ENCODE measurements at regions of chr1 and their contacts with region 1.

Region 1: GRCh38 chr1:211616232-211616979 is 37.4 kb upstream of the SLC30A1 start:
- DNase-seq: peak; percentile 58
- H3K4me3 ChIP-seq: no peak overlapping the region
- H3K27ac ChIP-seq: peak overlapping the region; percentile 39 to 42
- H3K4me1 ChIP-seq: no peaks in the 10 kb centered on the region
- H3K27me3 ChIP-seq: no peaks in the 10 kb centered on the region
- CTCF ChIP-seq: no peak
- POLR2A ChIP-seq: no peak

Region 2: DNA sequence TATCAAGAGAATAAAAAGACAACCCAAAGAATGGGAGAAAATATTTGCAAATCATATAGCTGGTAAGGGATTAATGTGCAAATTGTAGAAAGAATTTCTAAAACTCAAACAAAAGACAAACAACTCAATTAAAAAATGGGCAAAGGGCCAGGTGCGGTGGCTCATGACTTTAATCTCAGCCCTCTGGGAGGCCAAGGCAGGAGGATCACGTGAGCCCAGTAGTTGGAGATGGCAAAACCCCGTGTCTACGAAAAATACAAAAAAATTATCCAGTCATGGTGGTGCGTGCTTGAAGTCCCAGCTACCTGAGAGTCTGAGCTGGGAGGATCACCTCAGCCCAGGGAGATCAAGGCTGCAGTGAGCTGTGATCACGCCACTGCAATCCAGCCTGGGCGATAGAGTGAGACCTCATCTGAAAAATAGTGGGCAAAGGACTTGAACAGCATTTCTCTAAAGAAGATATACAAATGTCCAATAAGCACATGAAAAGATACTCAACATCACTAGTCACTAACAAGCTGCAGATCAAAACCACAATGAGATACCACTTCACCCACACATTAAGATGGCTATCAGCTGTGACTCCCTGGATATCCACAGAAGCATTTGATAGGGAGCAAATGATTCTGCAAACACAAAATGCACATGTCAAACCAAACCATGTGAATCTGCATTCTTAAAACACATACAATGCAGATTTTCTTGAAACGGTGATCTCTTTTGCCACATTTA is 58.3 kb before region 1 on chr1:
- intact Hi-C with region 1: no loop called
- DNase-seq: no peak
- H3K4me3 ChIP-seq: no peak overlapping the region
- H3K27ac ChIP-seq: no peak overlapping the region
- H3K4me1 ChIP-seq: no peaks in the 10 kb centered on the region
- H3K27me3 ChIP-seq: no peaks in the 10 kb centered on the region
- CTCF ChIP-seq: no peak
- POLR2A ChIP-seq: no peak

Region 3: DNA sequence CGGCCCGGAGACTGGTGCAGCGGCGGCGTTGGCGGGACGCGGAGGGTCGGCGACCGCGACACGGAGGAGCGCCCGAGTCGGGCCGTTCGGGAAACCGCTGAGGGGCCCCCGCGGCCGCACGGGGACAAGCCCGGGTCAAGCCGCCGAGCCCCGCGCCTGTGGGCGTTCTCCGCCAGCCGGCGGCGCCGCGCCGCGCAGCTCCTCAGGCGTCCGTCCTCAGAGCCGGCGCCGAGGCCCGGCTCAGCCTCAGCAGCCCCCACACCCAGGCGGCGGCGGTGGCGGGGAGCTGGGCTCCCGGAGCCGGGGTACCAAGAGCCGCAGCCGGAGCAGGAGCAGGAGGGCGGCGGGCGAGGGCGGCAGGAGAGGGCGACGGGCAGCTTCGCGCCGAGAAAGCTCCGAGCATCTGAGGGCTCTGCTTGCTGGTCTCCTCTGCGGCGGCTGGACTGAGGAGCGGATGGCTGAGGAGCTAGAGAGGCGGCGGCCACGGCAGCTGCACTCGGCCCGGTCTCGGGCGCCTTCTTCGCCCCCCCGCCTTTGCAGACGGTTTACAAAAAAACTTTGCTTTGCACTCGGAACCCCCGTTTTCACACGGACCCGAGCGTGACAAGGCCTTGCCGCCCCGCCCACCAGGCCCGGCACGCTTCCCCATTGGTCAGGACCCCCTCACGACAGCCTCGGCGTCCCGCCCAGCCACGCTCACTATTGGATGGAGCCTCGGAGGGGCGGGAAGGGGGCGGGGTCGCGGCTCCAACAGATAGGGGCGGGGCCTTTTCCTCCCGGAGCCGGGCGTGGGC is 37.6 kb before region 1 on chr1 and contains the start of gene SLC30A1:
- intact Hi-C with region 1: loop called (anchors 5 kb)
- DNase-seq: peak; percentile 99
- H3K4me3 ChIP-seq: peak within 1 kb of the TSS; percentile 91 to 92
- H3K27ac ChIP-seq: peak within 1 kb of the TSS; percentile 91 to 95
- H3K4me1 ChIP-seq: no peaks in the 10 kb centered on the region
- H3K27me3 ChIP-seq: no peaks in the 10 kb centered on the region
- CTCF ChIP-seq: peak in 1 of 4 experiments; percentile 10
- POLR2A ChIP-seq: peak; percentile 95
- total RNA-seq, gene SLC30A1: 12.5 to 22.0 TPM